CD4-positive, alpha-beta T cell (primary cell): ENCODE measurements at regions of chr16 and their contacts with region 1.

Region 1: GRCh38 chr16:29645694-29646187 is 17.3 kb upstream of the SPN start:
- DNase-seq: peak in 3 of 14 experiments; percentile 36 to 51 (median 45)
- ATAC-seq: no peak
- H3K4me3 ChIP-seq: no peak overlapping the region
- H3K4me3 Mint-ChIP-seq: no peak overlapping the region
- H3K27ac ChIP-seq: no peak overlapping the region
- H3K27ac Mint-ChIP-seq: no peak overlapping the region
- H3K4me1 ChIP-seq: peaks cover 21% of the 10 kb centered on the region
- H3K4me1 Mint-ChIP-seq: peaks cover 19% of the 10 kb centered on the region
- H3K27me3 ChIP-seq: no peaks in the 10 kb centered on the region
- H3K27me3 Mint-ChIP-seq: no peaks in the 10 kb centered on the region
- CTCF ChIP-seq: no peak

Region 2: DNA sequence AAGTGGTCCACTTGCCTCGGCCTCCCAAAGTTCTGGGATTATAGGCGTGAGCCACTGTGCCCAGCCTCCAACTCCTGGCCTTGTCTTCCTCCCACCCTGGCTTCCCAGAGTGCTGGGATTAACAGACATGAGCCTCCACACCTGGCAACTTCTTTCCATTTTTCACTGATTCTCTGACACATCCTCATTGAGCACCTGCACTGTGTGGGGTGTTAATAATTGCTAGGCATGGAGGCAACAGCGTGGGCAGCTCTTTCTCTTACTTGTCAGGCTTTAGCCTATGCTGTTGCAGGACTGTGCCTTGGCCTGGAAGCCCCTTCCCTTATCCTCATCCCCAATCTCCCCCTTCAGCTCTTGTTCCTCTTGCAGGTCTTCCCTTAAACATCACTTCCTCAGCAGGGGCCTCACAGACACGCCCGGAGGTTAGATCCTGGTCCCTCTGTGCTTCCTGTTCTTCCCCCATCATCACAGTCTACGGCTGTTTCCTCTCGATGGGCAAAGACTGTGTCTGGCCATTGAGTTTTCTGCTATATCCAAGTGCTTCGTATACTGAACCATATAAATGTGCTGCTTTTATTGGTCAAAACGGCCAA is 41.1 kb after region 1 on chr16:
- CTCF ChIA-PET with region 1: no interaction called
- POLR2A ChIA-PET with region 1: no interaction called
- intact Hi-C with region 1: loop called in 1 of 2 experiments (anchors 5 kb)
- DNase-seq: no peak
- ATAC-seq: no peak
- H3K4me3 ChIP-seq: no peak overlapping the region
- H3K4me3 Mint-ChIP-seq: no peak overlapping the region
- H3K27ac ChIP-seq: no peak overlapping the region
- H3K27ac Mint-ChIP-seq: no peak overlapping the region
- H3K4me1 ChIP-seq: peaks cover 12% of the 10 kb centered on the region
- H3K4me1 Mint-ChIP-seq: peaks cover 11% of the 10 kb centered on the region
- H3K27me3 ChIP-seq: no peaks in the 10 kb centered on the region
- H3K27me3 Mint-ChIP-seq: no peaks in the 10 kb centered on the region
- CTCF ChIP-seq: no peak

Region 3: DNA sequence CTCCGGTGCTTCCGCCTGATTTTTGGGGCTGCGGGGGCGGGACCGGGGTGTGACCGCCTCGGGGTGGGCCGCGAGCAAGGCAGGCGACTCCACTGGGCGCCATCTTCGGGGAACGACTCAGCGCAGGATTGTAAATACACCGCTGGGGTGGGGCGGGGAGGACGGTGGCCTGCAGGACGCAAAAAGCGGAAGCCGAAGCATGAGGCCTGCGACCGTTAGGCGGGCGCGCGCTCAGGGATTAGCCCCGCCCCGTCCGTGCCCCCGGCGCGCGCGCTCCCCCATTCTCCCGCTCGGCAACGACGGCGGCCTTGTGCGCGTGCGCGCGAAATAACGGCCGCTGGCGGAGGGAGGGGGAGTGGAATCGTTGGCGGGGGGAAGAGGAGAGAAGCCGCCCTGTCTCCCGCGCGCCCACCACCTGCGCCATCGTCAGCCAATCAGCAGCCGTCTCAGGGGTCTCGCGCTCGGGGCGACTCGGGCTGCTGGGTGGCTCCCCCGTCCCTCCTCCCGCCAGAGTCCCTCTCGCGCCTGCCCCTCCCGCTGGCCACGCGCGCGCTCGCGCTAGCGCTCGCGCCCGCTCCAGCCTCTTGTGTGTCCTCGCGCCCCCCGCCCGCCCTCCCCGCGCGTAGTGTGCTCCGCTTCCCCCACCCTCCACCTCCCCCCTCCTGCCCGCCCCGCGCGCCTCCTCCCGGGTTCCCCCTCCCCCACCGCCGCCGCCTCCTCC is 159.8 kb after region 1 on chr16:
- CTCF ChIA-PET with region 1: no interaction called
- POLR2A ChIA-PET with region 1: no interaction called
- intact Hi-C with region 1: no loop called
- DNase-seq: peak; percentile 95 to 99 (median 98)
- ATAC-seq: peak; percentile 63
- H3K4me3 ChIP-seq: peak overlapping the region; percentile 94
- H3K4me3 Mint-ChIP-seq: peak overlapping the region; percentile 100
- H3K27ac ChIP-seq: peak overlapping the region; percentile 92 to 96
- H3K27ac Mint-ChIP-seq: peak overlapping the region; percentile 96
- H3K4me1 ChIP-seq: peaks cover 52% of the 10 kb centered on the region
- H3K4me1 Mint-ChIP-seq: peaks cover 46% of the 10 kb centered on the region
- H3K27me3 ChIP-seq: no peaks in the 10 kb centered on the region
- H3K27me3 Mint-ChIP-seq: no peaks in the 10 kb centered on the region
- CTCF ChIP-seq: no peak

Region 4: GRCh38 chr16:30024451-30024850 is 378.7 kb after region 1 on chr16:
- CTCF ChIA-PET with region 1: no interaction called
- POLR2A ChIA-PET with region 1: no interaction called
- intact Hi-C with region 1: loop called in 1 of 2 experiments (anchors 5 kb)
- DNase-seq: no peak
- ATAC-seq: no peak
- H3K4me3 ChIP-seq: no peak overlapping the region
- H3K4me3 Mint-ChIP-seq: no peak overlapping the region
- H3K27ac ChIP-seq: no peak overlapping the region
- H3K27ac Mint-ChIP-seq: no peak overlapping the region
- H3K4me1 ChIP-seq: peaks cover 13% of the 10 kb centered on the region
- H3K4me1 Mint-ChIP-seq: peaks cover 12% of the 10 kb centered on the region
- H3K27me3 ChIP-seq: peaks cover 11 to 21% of the 10 kb centered on the region in 2 experiments
- H3K27me3 Mint-ChIP-seq: peaks cover 25% of the 10 kb centered on the region
- CTCF ChIP-seq: no peak